Mucosa of descending colon (tissue), 3 donors: ENCODE measurements at regions of chr5 and their contacts with region 1.

Region 1: GRCh38 chr5:174793684-174794328 is 69.4 kb downstream of the MSX2 start:
- DNase-seq: peak in 2 of 3 donors; percentile 54 to 64
- ATAC-seq: peak; percentile 62
- H3K4me3 ChIP-seq: no peak overlapping the region
- H3K4me1 ChIP-seq: no peaks in the 10 kb centered on the region
- CTCF ChIP-seq: peak; percentile 52

Region 2: DNA sequence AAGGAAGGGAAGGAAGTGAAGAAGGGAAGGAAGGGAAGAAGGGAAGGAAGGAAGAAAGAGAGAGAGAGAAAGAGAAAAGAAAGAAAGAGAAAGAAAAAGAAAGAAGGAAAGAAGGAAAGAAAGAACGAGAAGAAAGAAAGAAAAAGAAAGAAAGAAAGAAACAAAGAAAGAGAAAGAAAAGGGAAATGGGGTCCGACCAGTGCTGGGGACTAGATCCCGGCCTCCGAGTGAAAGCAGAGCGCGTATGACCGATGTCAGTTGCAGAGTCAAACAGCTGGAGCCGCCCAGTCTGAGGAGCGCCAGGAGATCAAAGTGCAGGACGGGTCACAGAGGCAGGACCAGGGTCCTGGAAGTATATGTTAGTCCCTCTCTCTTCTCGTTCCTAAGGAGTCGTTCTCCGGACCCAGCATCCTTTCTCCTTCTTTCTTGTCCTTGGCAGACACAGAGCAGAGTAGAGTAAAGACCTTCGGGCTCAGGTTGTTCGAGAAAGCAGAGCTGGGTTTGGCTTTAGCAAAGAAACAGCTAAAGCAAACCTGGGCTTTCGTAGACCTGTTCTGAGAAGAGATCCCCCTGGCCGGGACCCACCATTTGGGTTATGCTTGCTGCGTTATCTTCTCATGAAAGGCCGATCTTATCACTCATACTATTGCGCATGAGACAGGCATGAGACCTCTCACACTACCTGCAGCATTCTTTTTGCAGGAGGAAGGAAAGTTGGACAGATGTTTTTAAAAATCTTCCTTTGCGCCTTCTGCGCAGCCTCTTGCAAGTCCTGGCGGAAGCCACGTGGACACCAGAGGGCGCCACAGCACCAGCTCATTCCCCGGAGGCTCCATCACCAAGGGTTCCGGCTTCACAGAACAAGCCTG is 374.6 kb before region 1 on chr5:
- intact Hi-C with region 1: loop called (anchors 5 to 10 kb)
- DNase-seq: peak; percentile 79 to 94 (median 90)
- ATAC-seq: peak; percentile 87
- H3K4me3 ChIP-seq: no peak overlapping the region
- H3K4me1 ChIP-seq: no peaks in the 10 kb centered on the region
- CTCF ChIP-seq: peak; percentile 64

Region 3: GRCh38 chr5:174424219-174425053 is 369.4 kb before region 1 on chr5:
- intact Hi-C with region 1: loop called (anchors 5 to 10 kb)
- DNase-seq: no peak
- ATAC-seq: no peak
- H3K4me3 ChIP-seq: no peak overlapping the region
- H3K4me1 ChIP-seq: no peaks in the 10 kb centered on the region
- CTCF ChIP-seq: no peak

Region 4: DNA sequence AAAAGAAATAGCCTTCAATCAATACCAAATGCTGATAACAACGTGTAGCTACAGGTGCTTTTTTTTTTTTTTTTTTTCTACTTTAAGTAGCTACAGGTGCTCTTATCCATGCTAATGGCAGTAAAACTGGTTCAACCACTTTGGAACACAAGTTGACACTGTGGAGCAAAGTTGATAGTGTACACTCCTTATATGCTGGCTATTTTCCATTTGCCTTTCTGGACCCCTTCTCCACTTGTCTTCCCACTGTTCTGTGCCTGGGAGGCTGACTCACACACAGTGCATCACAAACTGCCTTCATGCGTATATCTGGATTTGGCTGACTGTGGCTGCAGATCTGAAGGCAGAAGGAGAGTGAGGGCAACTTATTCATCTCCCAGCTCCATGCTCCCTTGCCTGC is 178.5 kb after region 1 on chr5:
- intact Hi-C with region 1: no loop called
- DNase-seq: no peak
- ATAC-seq: peak; percentile 21
- H3K4me3 ChIP-seq: no peak overlapping the region
- H3K4me1 ChIP-seq: no peaks in the 10 kb centered on the region
- CTCF ChIP-seq: no peak